Heart left ventricle (tissue), 16 donors: ENCODE measurements at regions of chr2 and their contacts with region 1.

Region 1: DNA sequence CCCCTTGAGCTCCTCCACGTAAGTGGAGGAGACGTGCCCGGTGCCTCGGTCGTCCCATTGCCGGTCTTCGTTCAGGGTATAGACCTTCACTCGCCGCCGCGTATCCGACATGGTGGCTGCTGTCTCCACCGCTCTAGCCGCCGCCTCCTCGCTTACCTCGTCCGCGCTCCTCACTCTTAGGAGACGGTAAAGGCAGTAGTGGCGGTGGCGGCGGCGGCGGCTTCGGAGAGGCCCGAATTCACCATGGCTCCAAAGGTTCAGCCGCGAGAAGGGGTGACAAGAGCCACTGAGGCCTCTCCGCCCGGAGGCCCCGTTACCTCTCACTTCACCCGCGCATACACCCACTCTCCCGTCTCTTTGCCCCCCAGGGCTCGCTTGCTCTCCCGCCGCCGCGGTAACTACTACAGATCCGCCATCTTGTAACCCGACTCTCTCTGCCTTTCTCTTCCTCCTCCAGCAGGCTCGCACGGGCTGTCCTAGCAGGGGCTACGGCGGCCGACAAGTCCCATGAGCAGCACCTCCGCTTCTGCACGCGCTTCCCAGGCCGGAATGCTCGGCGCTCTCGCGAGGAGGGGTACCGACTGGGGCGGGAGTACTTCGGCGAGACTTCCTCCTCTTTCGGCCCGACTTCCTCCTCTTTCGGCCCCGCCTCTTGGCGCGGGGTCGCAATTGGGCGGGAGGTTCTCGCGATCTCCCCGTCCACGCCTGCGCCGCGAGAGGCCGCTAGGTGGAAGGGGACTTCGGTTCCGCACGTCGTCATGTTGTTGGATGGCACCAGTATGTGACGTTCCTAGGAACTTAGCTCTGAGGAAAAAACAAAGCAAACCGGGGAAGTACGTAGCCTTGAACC is at the start of gene PPP4R3B:
- DNase-seq: peak; percentile 100
- ATAC-seq: peak; percentile 95 to 97 (median 96)
- H3K4me3 ChIP-seq: peak within 1 kb of the TSS; percentile 66 to 98 (median 92)
- H3K27ac ChIP-seq: peak within 1 kb of the TSS; percentile 90 to 98 (median 97)
- H3K4me1 ChIP-seq: peaks cover 8 to 56% (median 32%) of the 10 kb centered on the region in 12 donors
- H3K27me3 ChIP-seq: no peaks in the 10 kb centered on the region
- CTCF ChIP-seq: peak; percentile 31 to 68 (median 52)
- POLR2A ChIP-seq: peak; percentile 64 to 94
- total RNA-seq, gene PPP4R3B: 21.0 to 32.4 (median 23.5) TPM

Region 2: DNA sequence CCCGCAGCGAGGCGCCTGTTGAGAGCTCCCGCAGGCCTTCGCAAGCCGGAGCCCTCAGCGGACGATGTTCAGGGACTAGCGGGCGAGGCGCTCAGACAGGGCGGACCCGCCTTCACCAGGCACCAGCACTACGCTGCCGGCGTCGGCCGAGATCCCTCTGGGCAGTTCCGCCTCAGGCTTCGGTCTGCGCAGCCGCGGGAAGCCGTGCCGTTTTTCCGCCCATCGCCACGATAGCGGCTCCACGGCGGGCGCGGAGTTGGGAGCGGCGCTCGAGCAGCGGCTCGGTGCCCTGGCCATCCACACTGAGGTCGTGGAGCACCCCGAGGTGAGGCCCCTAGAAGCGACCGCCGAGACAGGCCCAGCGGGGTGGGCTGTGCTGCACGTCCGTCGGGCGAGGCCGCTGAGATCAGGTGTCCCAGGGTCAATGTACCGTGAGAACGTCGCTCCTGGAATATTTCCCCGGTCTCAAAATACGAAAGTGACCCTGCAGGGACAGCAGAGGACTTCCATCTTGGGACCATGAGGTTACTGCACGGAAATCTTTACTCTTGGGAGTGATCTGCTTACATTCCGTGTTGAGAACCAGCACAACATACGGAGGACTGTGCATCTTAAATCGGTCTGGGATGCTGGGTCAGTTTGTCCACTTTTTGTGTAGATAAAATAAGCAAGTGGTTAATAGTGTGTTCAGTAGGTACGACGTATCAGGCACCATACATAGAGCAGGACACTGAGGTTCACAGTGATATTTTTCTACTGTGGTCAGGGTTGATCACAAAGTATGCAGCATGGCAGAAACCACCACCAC is 335.1 kb before region 1 on chr2:
- intact Hi-C with region 1: loop called in 1 of 10 experiments (anchors 5 kb)
- DNase-seq: peak; percentile 88 to 97 (median 95)
- ATAC-seq: peak; percentile 91 to 98 (median 98)
- H3K4me3 ChIP-seq: peak overlapping the region; percentile 43 to 96 (median 77)
- H3K27ac ChIP-seq: peak overlapping the region; percentile 83 to 98 (median 92)
- H3K4me1 ChIP-seq: peaks cover 0 to 25% (median 14%) of the 10 kb centered on the region in 12 donors
- H3K27me3 ChIP-seq: no peaks in the 10 kb centered on the region
- CTCF ChIP-seq: peak in 1 of 12 donors; percentile 15
- POLR2A ChIP-seq: peak in 1 of 2 donors; percentile 80

Region 3: DNA sequence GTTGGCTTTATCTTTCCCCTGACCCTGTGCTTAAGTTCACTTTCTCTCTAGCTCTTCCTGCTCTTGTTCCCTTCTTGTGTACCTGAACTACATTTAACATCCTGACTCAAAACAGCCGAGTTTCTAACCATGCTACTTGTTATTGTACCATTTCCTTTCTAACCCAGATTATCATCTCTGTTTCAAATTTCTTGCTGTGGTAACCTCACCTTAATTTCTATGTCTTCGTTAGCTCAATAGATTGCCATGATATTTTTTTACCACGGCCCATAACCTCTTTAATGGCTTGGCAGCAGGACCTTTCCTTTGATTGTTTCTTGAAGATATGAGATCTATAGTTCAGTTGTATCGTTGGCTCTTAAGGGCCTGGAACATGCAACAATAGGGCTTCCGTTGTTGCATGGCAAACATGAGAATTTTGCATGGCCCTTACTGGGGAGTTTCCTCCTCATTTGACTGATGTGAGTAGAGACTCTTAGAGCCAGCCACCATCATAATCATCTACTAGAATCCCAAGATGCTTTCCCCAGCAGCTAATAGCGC is 86.8 kb before region 1 on chr2:
- intact Hi-C with region 1: loop called in 1 of 10 experiments (anchors 5 kb)
- DNase-seq: no peak
- ATAC-seq: peak in 3 of 4 donors; percentile 51 to 62 (median 53)
- H3K4me3 ChIP-seq: no peak overlapping the region
- H3K27ac ChIP-seq: peak overlapping the region in 10 of 12 donors; percentile 7 to 66 (median 45)
- H3K4me1 ChIP-seq: peaks cover 0 to 5% (median 0%) of the 10 kb centered on the region in 12 donors
- H3K27me3 ChIP-seq: no peaks in the 10 kb centered on the region
- CTCF ChIP-seq: no peak
- POLR2A ChIP-seq: no peak

Region 4: DNA sequence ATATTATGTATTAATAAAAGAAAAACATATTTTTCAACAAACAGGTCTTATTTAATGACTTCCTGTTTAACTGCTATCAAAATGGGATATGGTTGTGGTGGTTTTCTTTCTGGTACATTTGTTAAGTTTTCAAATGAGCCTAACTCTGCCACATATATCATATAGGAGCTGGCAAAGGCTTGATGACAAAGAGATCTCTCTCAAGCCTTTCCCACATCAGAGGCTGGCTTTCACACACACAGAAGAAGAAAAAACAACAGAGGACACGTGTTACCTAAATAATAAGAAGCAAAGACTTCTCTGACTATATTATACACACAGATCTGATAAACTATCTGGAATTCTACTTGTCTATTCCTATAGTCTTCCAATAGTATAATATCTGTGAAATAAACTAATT is 51.8 kb before region 1 on chr2:
- intact Hi-C with region 1: no loop called
- DNase-seq: no peak
- ATAC-seq: no peak
- H3K4me3 ChIP-seq: no peak overlapping the region
- H3K27ac ChIP-seq: no peak overlapping the region
- H3K4me1 ChIP-seq: no peaks in the 10 kb centered on the region
- H3K27me3 ChIP-seq: no peaks in the 10 kb centered on the region
- CTCF ChIP-seq: no peak
- POLR2A ChIP-seq: no peak

Region 5: DNA sequence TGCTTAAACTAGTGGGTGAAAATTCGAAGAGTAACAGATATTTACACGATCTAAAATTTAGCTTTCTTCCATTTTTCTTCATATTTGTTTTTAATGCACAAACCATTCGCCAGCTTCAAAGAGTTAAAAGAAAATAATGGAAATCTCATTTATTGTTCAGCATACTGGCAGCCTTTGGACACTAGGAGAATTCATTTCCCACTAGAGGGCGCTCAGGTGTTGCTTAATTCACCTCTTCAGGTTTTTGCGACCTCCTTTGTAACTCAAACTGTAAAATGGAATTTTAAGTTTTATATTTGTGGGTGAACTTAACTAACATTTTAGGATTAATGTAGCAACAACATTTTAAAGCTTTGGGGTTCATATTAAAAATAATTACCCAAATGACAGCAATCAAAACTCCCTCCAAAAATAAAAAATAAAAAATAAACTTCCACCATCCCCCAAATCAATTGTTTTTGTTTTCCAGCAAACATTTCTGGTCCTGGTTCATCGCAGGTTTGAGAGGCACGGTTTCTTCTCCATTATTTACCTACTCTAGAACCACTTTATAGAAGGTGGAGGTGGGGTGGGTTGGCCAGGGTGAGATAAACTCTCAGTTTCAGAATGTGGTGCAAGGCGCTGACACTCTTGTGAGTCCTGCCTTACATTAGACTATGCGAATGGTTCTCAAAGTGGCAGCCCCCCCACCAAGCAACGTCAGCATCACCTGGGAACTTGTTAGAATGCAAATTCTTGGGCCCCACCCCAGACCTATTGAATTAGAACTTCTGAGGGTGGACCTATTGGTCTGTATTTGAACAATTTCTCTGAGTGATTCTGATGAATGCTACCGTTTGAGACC is 101.0 kb after region 1 on chr2:
- intact Hi-C with region 1: no loop called
- DNase-seq: peak in 3 of 5 donors; percentile 34 to 45 (median 39)
- ATAC-seq: peak in 2 of 4 donors; percentile 38 to 56
- H3K4me3 ChIP-seq: no peak overlapping the region
- H3K27ac ChIP-seq: no peak overlapping the region
- H3K4me1 ChIP-seq: no peaks in the 10 kb centered on the region
- H3K27me3 ChIP-seq: no peaks in the 10 kb centered on the region
- CTCF ChIP-seq: peak; percentile 60 to 89 (median 78)
- POLR2A ChIP-seq: no peak